MCF 10A (cell line): ENCODE measurements at regions of chr13 and their contacts with region 1.

Region 1: DNA sequence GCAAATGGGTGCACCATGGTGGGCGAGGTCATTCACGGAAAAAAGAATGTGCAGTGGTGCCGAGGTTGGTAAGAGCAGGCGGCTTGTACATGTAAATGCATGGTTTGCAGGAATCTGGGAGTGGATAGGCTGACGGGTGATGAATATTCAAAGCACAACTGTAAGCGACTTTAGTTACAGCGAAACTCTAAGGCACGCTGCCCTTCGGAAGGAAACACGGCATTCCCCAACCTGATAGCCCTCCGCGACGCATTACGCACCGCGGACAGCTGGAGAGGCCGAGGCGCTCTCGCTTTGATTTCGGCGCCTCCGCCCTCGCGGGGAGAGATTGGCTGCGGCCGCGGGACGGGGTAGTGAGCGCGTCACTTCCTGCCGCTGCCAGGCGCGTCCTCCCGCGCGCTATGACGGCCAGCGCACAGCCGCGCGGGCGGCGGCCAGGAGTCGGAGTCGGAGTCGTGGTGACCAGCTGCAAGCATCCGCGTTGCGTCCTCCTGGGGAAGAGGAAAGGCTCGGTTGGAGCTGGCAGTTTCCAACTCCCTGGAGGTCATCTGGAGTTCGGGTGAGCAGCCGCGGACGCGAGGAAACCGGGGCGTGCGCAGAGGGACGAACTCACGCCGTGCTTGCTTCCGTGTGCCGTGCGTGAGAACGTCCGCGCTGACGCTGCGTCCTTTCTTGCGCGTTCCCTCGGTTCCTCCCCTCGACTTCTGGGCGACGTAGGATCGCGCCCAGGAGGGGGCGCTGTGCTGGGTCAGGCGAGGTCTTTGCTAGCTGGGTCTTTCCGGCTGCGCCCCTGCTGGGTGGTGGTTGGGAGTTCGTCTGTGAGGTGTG is at the start of gene NUDT15:
- DNase-seq: peak; percentile 95
- H3K4me3 Mint-ChIP-seq: peak within 1 kb of the TSS; percentile 90
- H3K27ac Mint-ChIP-seq: peak within 1 kb of the TSS; percentile 96
- H3K4me1 Mint-ChIP-seq: peaks cover 10% of the 10 kb centered on the region
- H3K27me3 Mint-ChIP-seq: no peaks in the 10 kb centered on the region
- CTCF ChIP-seq: peak; percentile 97
- total RNA-seq, gene NUDT15: 12.0 and 21.6 TPM in 2 replicates

Region 2: DNA sequence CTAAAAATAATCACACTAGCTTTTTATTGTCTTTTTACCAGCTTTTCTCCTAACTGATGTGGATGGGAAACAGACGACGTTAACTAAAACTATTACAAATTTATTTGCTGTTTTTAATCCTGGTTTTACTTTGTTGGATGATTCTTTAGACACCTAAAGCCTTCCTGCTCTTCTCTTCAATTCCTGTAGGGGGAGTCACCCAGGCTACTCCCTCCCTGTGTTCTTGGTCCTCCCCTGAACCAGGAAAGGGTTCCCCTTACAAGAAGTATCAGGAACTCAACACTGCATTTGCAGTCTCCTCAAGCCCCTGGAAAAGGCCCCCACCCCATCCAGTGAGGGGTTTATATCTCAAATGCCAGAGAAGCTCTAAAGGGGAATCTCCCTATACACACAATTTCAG is 242.6 kb before region 1 on chr13:
- CTCF ChIA-PET with region 1: interaction called, 4 read pairs
- POLR2A ChIA-PET with region 1: interaction called, 3 read pairs
- intact Hi-C with region 1: loop called (anchors 1 kb)
- DNase-seq: peak; percentile 42
- H3K4me3 Mint-ChIP-seq: no peak overlapping the region
- H3K27ac Mint-ChIP-seq: no peak overlapping the region
- H3K4me1 Mint-ChIP-seq: no peaks in the 10 kb centered on the region
- H3K27me3 Mint-ChIP-seq: no peaks in the 10 kb centered on the region
- CTCF ChIP-seq: peak; percentile 38

Region 3: DNA sequence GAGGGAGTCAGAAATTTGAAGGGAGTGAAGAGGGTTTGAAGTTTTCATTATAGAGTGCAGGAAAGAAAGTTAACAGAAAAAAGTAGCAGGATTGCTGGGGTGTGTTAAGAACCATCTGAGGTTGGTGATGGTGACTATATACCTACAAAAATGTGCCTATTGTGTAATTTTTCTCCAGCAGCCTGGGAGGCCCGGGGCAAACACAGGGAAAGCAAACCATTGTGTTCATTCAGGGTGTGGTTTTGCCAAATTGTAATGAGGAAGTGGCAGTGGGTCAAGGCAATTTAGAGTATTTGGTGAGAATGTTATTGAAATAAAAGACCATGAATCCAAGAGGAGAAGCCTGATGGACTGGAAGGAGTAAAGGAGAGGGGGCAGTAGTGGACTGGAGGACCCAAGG is 28.3 kb before region 1 on chr13:
- CTCF ChIA-PET with region 1: interaction called, 19 read pairs
- POLR2A ChIA-PET with region 1: interaction called, 70 read pairs
- intact Hi-C with region 1: loop called (anchors 2 kb)
- DNase-seq: peak; percentile 89
- H3K4me3 Mint-ChIP-seq: peak overlapping the region; percentile 50
- H3K27ac Mint-ChIP-seq: peak overlapping the region; percentile 97
- H3K4me1 Mint-ChIP-seq: peaks cover 36% of the 10 kb centered on the region
- H3K27me3 Mint-ChIP-seq: no peaks in the 10 kb centered on the region
- CTCF ChIP-seq: no peak

Region 4: GRCh38 chr13:48050550-48050949 is 13.0 kb after region 1 on chr13:
- CTCF ChIA-PET with region 1: interaction called, 34 read pairs
- POLR2A ChIA-PET with region 1: interaction called, 18 read pairs
- intact Hi-C with region 1: no loop called
- DNase-seq: no peak
- H3K4me3 Mint-ChIP-seq: no peak overlapping the region
- H3K27ac Mint-ChIP-seq: no peak overlapping the region
- H3K4me1 Mint-ChIP-seq: no peaks in the 10 kb centered on the region
- H3K27me3 Mint-ChIP-seq: no peaks in the 10 kb centered on the region
- CTCF ChIP-seq: no peak

Region 5: GRCh38 chr13:48094781-48095502 is 57.4 kb after region 1 on chr13 and contains the start of gene MED4:
- CTCF ChIA-PET with region 1: interaction called, 16 read pairs
- POLR2A ChIA-PET with region 1: interaction called, 21 read pairs
- intact Hi-C with region 1: no loop called
- DNase-seq: peak; percentile 94
- H3K4me3 Mint-ChIP-seq: peak within 1 kb of the TSS; percentile 83
- H3K27ac Mint-ChIP-seq: peak within 1 kb of the TSS; percentile 96
- H3K4me1 Mint-ChIP-seq: peaks cover 13% of the 10 kb centered on the region
- H3K27me3 Mint-ChIP-seq: no peaks in the 10 kb centered on the region
- CTCF ChIP-seq: peak; percentile 99
- total RNA-seq, gene MED4: 45.2 and 56.5 TPM in 2 replicates